ENCODE measurements at regions of chr12 and their contacts with region 1.

Region 1: GRCh38 chr12:113048716-113049127 is 7.8 kb upstream of the DTX1 start:
- DNase-seq: peak; percentile 80
- H3K4me3 Mint-ChIP-seq: no peak overlapping the region
- H3K27ac Mint-ChIP-seq: no peak overlapping the region
- H3K4me1 Mint-ChIP-seq: no peaks in the 10 kb centered on the region
- H3K27me3 Mint-ChIP-seq: peaks cover 83% of the 10 kb centered on the region
- CTCF ChIP-seq: peak; percentile 59

Region 2: DNA sequence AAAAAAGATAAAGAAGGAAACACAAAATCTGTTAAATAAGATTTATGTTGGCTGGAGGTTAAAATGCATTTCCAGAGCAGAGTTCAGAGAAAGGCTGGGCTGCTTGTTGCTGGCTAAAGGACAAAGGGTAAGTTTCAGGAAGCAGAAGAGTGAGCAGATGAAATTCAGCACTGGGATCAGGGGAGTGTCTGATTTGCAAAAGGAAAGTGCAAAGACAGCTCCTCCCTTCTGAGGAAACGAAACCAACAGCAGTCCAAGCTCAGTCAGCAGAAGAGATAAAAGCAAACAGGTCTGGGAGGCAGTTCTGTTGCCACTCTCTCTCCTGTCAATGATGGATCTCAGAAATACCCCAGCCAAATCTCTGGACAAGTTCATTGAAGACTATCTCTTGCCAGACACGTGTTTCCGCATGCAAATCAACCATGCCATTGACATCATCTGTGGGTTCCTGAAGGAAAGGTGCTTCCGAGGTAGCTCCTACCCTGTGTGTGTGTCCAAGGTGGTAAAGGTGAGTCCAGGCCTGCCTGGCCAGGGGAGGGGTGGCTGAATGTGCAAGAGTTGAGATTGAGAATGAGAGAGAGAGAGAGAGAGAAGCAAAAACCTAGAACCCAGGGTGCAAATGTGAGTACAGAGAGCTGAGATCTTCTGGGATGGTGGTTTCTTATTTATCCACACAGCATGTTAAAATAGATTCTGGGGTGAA is 141.9 kb before region 1 on chr12 and contains the start of gene OAS1:
- CTCF ChIA-PET with region 1: no interaction called
- intact Hi-C with region 1: no loop called
- DNase-seq: peak; percentile 67
- H3K4me3 Mint-ChIP-seq: peak within 1 kb of the TSS; percentile 74
- H3K27ac Mint-ChIP-seq: peak within 1 kb of the TSS; percentile 17
- H3K4me1 Mint-ChIP-seq: peaks cover 48% of the 10 kb centered on the region
- H3K27me3 Mint-ChIP-seq: no peaks in the 10 kb centered on the region
- CTCF ChIP-seq: no peak
- total RNA-seq, gene OAS1: 170 and 429 TPM in 2 replicates

Region 3: GRCh38 chr12:113120670-113121370 is 72.1 kb after region 1 on chr12:
- CTCF ChIA-PET with region 1: no interaction called
- intact Hi-C with region 1: no loop called
- DNase-seq: no peak
- H3K4me3 Mint-ChIP-seq: no peak overlapping the region
- H3K27ac Mint-ChIP-seq: peak overlapping the region; percentile 23
- H3K4me1 Mint-ChIP-seq: no peaks in the 10 kb centered on the region
- H3K27me3 Mint-ChIP-seq: no peaks in the 10 kb centered on the region
- CTCF ChIP-seq: no peak

Region 4: GRCh38 chr12:113174461-113175384 is 126.0 kb after region 1 on chr12:
- CTCF ChIA-PET with region 1: interaction called, 4 read pairs
- intact Hi-C with region 1: loop called (anchors 2 kb)
- DNase-seq: peak; percentile 89
- H3K4me3 Mint-ChIP-seq: no peak overlapping the region
- H3K27ac Mint-ChIP-seq: no peak overlapping the region
- H3K4me1 Mint-ChIP-seq: peaks cover 8% of the 10 kb centered on the region
- H3K27me3 Mint-ChIP-seq: no peaks in the 10 kb centered on the region
- CTCF ChIP-seq: peak; percentile 94

Measured in Calu3 (cell line).